ENCODE measurements at regions of chr5 and their contacts with region 1.

Region 1: GRCh38 chr5:147628058-147628895 is 118.4 kb upstream of the DPYSL3 start:
- DNase-seq: peak; percentile 33
- H3K4me3 Mint-ChIP-seq: no peak overlapping the region
- H3K27ac Mint-ChIP-seq: no peak overlapping the region
- H3K4me1 Mint-ChIP-seq: no peaks in the 10 kb centered on the region
- H3K27me3 Mint-ChIP-seq: no peaks in the 10 kb centered on the region

Region 2: DNA sequence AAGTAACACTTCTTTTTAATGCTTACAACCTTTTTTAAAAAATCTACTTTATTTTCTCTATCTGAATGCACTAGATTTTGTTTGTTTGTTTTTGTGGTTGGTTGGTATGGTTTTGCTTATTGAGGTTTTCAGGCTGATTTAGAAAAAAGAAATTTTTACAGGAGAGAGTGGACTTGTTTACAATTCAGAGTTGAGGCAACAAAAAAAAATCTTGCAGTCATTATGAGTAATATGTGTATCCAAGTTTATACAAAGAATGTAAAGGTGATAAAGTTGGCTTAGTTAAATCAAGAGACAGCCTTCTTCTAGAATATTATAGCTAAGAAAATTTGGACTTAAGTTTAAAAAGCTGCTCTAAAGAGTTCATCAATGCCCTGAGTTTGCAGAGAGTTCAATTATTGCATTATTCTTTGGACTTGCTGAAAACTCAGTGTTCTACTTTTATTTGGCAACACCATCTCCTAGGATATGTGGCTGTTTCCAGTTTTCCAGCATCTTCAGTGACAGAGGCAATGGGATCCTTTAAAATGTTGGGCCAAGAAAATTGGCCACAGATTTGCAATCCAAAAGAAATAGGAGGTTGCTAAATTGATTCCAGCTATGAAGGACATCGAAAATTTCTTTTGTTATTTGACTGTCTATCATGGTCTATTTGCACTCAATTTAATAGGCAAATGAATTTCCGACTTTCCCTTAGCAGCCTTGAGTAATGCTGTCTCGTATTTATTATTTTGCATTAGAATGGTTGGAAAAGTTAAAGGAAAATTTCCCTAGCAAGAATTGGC is 382.7 kb before region 1 on chr5:
- CTCF ChIA-PET with region 1: no interaction called
- POLR2A ChIA-PET with region 1: no interaction called
- DNase-seq: no peak
- H3K4me3 Mint-ChIP-seq: no peak overlapping the region
- H3K27ac Mint-ChIP-seq: no peak overlapping the region
- H3K4me1 Mint-ChIP-seq: no peaks in the 10 kb centered on the region
- H3K27me3 Mint-ChIP-seq: no peaks in the 10 kb centered on the region

Region 3: GRCh38 chr5:147567917-147568598 is 60.2 kb before region 1 on chr5:
- CTCF ChIA-PET with region 1: no interaction called
- POLR2A ChIA-PET with region 1: no interaction called
- DNase-seq: no peak
- H3K4me3 Mint-ChIP-seq: no peak overlapping the region
- H3K27ac Mint-ChIP-seq: no peak overlapping the region
- H3K4me1 Mint-ChIP-seq: no peaks in the 10 kb centered on the region
- H3K27me3 Mint-ChIP-seq: no peaks in the 10 kb centered on the region

Region 4: DNA sequence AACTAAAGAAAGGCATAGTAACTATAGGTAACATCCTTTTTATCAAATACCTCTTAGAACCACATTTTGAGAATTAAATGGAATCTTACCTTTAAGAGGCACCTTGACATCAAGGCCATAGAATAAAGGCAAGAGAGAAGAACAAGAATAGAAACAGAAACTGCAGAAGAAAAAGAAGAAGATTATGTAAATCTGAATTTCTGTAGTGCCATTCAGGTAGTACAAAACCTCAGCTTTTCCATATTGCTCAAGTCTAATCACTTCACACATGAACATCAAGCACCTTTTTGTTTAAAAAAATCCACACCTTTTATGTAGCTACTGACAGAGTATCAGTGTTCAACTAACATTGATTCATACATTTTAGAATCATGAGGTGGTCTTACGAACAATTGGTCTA is 26.6 kb before region 1 on chr5:
- CTCF ChIA-PET with region 1: no interaction called
- POLR2A ChIA-PET with region 1: no interaction called
- DNase-seq: no peak
- H3K4me3 Mint-ChIP-seq: no peak overlapping the region
- H3K27ac Mint-ChIP-seq: no peak overlapping the region
- H3K4me1 Mint-ChIP-seq: no peaks in the 10 kb centered on the region
- H3K27me3 Mint-ChIP-seq: no peaks in the 10 kb centered on the region

Region 5: DNA sequence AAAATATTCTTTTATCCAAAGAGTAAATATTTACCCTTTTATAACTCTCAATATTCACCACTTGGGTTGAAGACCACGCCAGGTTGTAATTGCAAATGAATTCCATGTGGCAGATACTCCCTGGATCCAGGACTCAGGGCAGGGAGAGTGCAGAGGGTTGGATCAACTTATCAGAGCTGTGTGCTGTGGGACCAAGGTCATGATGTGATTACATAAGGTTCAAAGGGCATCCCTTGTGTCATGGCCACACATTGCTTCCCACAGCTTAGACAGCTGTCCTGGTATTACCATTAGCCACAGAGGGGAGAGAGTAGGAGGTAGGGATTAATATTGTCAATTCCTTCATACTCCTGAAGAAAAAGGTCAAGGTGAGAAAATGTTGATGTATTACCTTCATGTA is 20.3 kb after region 1 on chr5:
- CTCF ChIA-PET with region 1: no interaction called
- POLR2A ChIA-PET with region 1: no interaction called
- DNase-seq: no peak
- H3K4me3 Mint-ChIP-seq: no peak overlapping the region
- H3K27ac Mint-ChIP-seq: no peak overlapping the region
- H3K4me1 Mint-ChIP-seq: no peaks in the 10 kb centered on the region
- H3K27me3 Mint-ChIP-seq: no peaks in the 10 kb centered on the region

Region 6: GRCh38 chr5:147822686-147823491 is 194.6 kb after region 1 on chr5:
- CTCF ChIA-PET with region 1: interaction called, 18 read pairs
- POLR2A ChIA-PET with region 1: no interaction called
- DNase-seq: peak; percentile 28
- H3K4me3 Mint-ChIP-seq: no peak overlapping the region
- H3K27ac Mint-ChIP-seq: no peak overlapping the region
- H3K4me1 Mint-ChIP-seq: no peaks in the 10 kb centered on the region
- H3K27me3 Mint-ChIP-seq: no peaks in the 10 kb centered on the region

Measured in activated CD4-positive, alpha-beta memory T cell treated with anti-CD3 and anti-CD28 coated beads, Interleukin-2, amount 10 ng/mL, durations not matched to agents 7 days and 5 days (primary cell).